Ascending aorta (tissue), 2 donors: ENCODE measurements at regions of chr3 and their contacts with region 1.

Region 1: DNA sequence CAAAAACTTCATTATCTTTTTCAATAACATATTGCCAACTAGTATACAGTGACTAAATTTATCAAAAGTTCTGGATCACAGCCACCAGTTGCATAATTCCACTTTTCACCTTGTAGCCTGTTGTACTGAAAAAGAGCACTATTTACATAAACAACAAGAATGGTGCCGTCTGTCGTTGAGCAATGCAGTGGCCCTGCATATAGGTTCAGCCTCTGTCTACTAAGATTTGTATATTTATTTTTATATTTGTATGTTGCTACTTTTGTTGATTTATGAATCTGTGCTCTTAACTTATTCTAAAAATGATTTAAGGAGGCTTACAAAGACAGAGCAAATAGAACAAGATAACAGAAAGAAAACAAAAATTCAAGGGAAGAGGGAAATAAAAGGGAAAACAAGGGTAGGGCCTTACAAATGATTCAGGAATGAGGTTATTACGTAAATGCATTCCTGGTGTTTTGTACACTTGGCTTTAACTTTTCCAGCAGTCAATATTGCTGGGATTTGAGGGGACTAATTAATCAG is 257.6 kb upstream of the STT3B start:
- DNase-seq: no peak
- H3K4me3 ChIP-seq: no peak overlapping the region
- H3K27ac ChIP-seq: peak overlapping the region; percentile 68 to 74
- H3K4me1 ChIP-seq: peaks cover 0 to 39% of the 10 kb centered on the region in 2 donors
- H3K27me3 ChIP-seq: no peaks in the 10 kb centered on the region
- CTCF ChIP-seq: no peak

Region 2: GRCh38 chr3:31166249-31166885 is 108.7 kb before region 1 on chr3:
- intact Hi-C with region 1: loop called (anchors 5 kb)
- DNase-seq: peak in 1 of 2 donors; percentile 79
- H3K4me3 ChIP-seq: peak overlapping the region in 1 of 2 donors; percentile 43
- H3K27ac ChIP-seq: peak overlapping the region; percentile 53 to 66
- H3K4me1 ChIP-seq: peaks cover 2 to 23% of the 10 kb centered on the region in 2 donors
- H3K27me3 ChIP-seq: no peaks in the 10 kb centered on the region
- CTCF ChIP-seq: no peak

Region 3: DNA sequence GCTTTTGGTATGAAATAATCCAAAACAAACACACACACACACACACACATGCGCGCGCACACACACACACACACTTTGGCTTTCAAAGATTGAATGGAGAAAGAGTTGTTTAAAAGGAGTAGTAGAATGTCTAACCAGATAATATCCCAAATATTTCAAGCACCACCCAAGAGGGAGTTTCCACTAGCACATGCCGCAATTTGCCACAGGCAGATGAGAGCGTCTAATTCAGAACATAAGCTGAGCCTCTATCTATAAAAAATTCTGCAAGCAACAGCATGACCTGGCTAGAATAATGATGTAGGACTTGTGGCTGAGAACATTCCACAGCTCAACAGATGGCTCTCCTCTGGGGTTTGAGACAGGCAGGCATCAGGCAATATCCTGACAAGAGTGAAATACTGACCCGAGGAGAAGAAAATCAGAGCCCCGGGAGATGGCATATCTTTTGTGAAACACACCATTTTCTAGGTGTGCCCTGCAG is 78.2 kb before region 1 on chr3:
- intact Hi-C with region 1: loop called (anchors 5 kb)
- DNase-seq: peak in 1 of 2 donors; percentile 67
- H3K4me3 ChIP-seq: peak overlapping the region in 1 of 2 donors; percentile 28
- H3K27ac ChIP-seq: peak overlapping the region; percentile 21 to 40
- H3K4me1 ChIP-seq: peaks cover 0 to 6% of the 10 kb centered on the region in 2 donors
- H3K27me3 ChIP-seq: no peaks in the 10 kb centered on the region
- CTCF ChIP-seq: no peak

Region 4: DNA sequence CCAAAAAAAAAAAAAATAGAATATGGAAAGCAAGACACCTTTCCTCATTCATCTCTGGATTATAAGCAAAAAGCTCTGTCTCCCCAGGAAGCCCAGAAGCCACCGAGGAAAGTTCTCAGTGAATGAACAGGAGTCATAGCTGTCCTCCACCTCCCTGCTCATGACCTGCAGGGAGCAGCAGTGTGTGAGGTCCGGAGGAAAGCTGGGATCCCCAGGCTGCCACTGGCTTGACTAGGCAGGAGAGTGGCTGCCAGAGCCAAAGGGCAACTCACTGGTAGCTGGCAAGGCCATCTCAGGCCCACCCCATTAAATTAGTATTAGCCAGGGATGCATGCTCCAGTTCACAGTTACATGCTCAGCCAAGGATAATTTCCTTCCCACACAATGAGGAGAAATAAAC is 66.0 kb after region 1 on chr3:
- intact Hi-C with region 1: no loop called
- DNase-seq: no peak
- H3K4me3 ChIP-seq: no peak overlapping the region
- H3K27ac ChIP-seq: no peak overlapping the region
- H3K4me1 ChIP-seq: no peaks in the 10 kb centered on the region
- H3K27me3 ChIP-seq: no peaks in the 10 kb centered on the region
- CTCF ChIP-seq: no peak